Heart right ventricle (tissue), 16 donors: ENCODE measurements at regions of chr22 and their contacts with region 1.

Region 1: DNA sequence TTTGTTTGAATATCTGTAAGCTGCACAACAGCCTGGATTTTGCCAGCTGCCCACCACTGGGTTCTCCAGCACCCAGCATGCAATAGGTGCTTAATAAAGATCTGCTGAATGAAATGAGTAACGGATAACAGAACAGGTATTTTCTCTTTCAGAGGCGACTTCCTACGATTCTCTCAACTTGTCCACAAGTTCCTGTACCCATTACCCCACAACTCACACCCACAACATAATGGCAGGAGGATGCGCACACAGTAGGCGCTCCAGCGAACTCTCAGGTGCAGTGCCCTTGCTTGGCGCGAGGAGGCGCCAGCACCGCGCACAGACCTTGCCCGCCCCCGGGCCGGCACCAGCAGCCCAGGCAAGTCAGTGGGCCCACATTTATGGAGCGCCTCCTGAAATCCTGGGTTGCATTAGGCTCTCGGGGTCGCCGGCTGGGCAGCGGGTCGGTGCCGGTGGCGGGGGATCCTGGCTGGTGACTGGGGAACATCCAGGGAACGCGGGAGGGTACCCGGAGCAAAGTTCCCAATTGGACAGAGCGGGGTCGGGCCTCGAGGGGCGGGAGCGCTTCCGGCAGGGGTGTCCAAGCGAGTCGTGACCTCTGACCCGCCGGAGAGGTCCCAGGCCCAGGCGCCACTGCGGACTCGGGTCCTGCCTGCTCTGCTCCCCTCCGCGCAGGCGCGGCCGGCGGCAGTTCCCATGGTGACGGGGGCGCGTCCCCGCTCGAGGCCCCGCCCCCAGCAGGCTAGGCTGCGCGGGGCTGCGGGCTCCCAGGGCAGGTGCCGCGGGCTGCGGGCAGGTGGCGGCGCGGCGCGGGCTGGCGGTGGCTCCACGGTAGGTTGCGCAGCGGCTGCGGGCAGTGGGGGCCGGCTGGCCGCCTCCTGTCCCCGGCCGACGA is at the start of gene KIAA1671:
- DNase-seq: peak; percentile 84 to 91
- ATAC-seq: peak; percentile 95 to 97 (median 96)
- H3K4me3 ChIP-seq: peak within 1 kb of the TSS; percentile 56 to 98 (median 78)
- H3K27ac ChIP-seq: peak within 1 kb of the TSS; percentile 34 to 94 (median 83)
- H3K4me1 ChIP-seq: peaks cover 5 to 49% (median 19%) of the 10 kb centered on the region in 9 donors
- H3K27me3 ChIP-seq: peaks cover 0 to 26% (median 0%) of the 10 kb centered on the region in 7 donors
- CTCF ChIP-seq: peak in 8 of 9 donors; percentile 95 to 100 (median 99)
- total RNA-seq, gene KIAA1671: 8.9 to 26.2 (median 14.0) TPM

Region 2: GRCh38 chr22:24985826-24986214 is 33.6 kb after region 1 on chr22:
- intact Hi-C with region 1: loop called in 2 of 10 experiments (anchors 5 kb)
- DNase-seq: peak; percentile 37 to 75
- ATAC-seq: peak; percentile 69 to 90 (median 80)
- H3K4me3 ChIP-seq: peak overlapping the region in 2 of 10 donors; percentile 20 to 22
- H3K27ac ChIP-seq: peak overlapping the region; percentile 33 to 87 (median 78)
- H3K4me1 ChIP-seq: peaks cover 7 to 97% (median 57%) of the 10 kb centered on the region in 9 donors
- H3K27me3 ChIP-seq: no peaks in the 10 kb centered on the region
- CTCF ChIP-seq: no peak